ENCODE measurements at regions of chr13 and their contacts with region 1.

Region 1: GRCh38 chr13:113220877-113221276 is 11.5 kb downstream of the CUL4A start:
- DNase-seq: peak; percentile 36
- ATAC-seq: peak; percentile 70
- H3K4me3 Mint-ChIP-seq: no peak overlapping the region
- H3K27ac Mint-ChIP-seq: no peak overlapping the region
- H3K4me1 Mint-ChIP-seq: peaks cover 13% of the 10 kb centered on the region
- H3K27me3 Mint-ChIP-seq: no peaks in the 10 kb centered on the region

Region 2: GRCh38 chr13:113029487-113030258 is 191.2 kb before region 1 on chr13:
- CTCF ChIA-PET with region 1: no interaction called
- POLR2A ChIA-PET with region 1: no interaction called
- intact Hi-C with region 1: loop called in 1 of 2 experiments (anchors 1 kb)
- DNase-seq: peak; percentile 75
- ATAC-seq: peak; percentile 57
- H3K4me3 Mint-ChIP-seq: no peak overlapping the region
- H3K27ac Mint-ChIP-seq: no peak overlapping the region
- H3K4me1 Mint-ChIP-seq: no peaks in the 10 kb centered on the region
- H3K27me3 Mint-ChIP-seq: no peaks in the 10 kb centered on the region

Region 3: GRCh38 chr13:113991191-113991669 is 770.4 kb after region 1 on chr13:
- CTCF ChIA-PET with region 1: no interaction called
- POLR2A ChIA-PET with region 1: no interaction called
- intact Hi-C with region 1: no loop called
- DNase-seq: no peak
- ATAC-seq: no peak
- H3K4me3 Mint-ChIP-seq: no peak overlapping the region
- H3K27ac Mint-ChIP-seq: no peak overlapping the region
- H3K4me1 Mint-ChIP-seq: peaks cover 7% of the 10 kb centered on the region
- H3K27me3 Mint-ChIP-seq: no peaks in the 10 kb centered on the region